Activated CD4-positive, alpha-beta T cell treated with anti-CD3 and anti-CD28 coated beads for 36 hours (primary cell): ENCODE measurements at regions of chr3 and their contacts with region 1.

Region 1: DNA sequence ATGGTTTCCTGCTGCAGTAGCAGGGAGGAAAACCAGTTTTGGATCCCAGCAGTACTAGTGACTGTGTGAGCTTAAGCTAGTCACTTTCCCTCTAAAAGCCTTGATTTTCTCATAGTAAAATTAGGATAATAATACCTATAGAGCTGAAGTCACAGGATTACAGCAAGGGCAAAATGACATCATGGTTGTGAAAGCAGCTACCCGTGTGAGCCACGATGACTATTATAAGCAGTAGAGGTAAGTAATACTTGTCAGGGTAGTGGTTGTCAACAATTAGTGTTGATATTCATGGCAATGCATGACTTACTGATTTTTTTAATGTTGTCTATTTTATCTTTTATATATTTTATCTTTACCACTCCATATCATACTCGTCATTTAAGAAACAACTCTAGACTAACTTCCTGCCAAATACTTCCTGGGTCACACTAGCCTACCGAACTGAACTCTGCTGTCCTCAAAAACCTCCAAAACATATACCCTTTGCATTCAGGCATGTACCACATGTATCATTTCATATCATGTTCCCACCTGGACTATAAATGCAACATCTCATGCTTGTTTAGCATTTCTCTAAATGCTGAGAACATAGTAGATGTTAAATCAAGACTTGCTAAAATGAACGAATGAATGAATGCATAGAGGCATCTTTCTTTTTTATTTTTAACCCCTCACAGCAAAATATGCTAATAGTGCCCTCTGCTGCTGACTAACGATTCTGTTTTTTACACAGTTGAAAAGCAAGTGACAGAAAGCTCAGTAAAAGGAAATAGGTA is 172.6 kb downstream of the P3H2 start:
- DNase-seq: peak; percentile 26
- ATAC-seq: peak; percentile 62
- H3K4me3 Mint-ChIP-seq: no peak overlapping the region
- H3K27ac Mint-ChIP-seq: peak overlapping the region; percentile 3
- H3K4me1 Mint-ChIP-seq: peaks cover 18% of the 10 kb centered on the region
- H3K27me3 Mint-ChIP-seq: no peaks in the 10 kb centered on the region

Region 2: DNA sequence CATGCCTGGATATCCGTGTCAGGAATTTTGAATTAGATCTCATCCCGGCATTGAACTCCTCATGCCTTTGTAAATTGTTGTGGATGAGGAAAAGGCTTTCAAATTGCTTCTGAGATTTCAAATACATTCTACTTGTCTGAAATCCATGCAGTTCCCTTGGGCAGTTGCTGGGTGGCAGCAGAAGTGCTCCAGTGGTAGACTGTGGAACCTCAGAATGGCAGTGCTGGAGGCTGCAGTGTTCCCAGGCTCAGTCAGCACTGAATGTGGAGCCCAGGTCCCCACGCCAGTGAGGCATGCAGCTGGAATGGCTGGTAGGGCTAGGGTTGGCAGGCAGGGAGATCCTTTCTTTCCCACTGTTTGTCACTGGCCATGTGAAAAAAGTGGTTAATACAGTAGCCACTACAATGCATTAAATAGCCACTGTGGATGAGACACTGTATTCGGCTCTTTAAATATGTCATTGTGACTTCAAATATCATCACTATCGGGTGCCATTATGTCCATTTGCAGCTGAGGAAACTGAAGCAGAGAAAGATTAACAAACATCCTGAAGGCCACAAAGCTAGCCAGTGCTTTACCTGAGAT is 677.8 kb before region 1 on chr3:
- CTCF ChIA-PET with region 1: interaction called, 22 read pairs
- POLR2A ChIA-PET with region 1: no interaction called
- intact Hi-C with region 1: loop called (anchors 1 to 2 kb)
- DNase-seq: peak; percentile 67
- ATAC-seq: peak; percentile 80
- H3K4me3 Mint-ChIP-seq: no peak overlapping the region
- H3K27ac Mint-ChIP-seq: no peak overlapping the region
- H3K4me1 Mint-ChIP-seq: peaks cover 18% of the 10 kb centered on the region
- H3K27me3 Mint-ChIP-seq: no peaks in the 10 kb centered on the region

Region 3: DNA sequence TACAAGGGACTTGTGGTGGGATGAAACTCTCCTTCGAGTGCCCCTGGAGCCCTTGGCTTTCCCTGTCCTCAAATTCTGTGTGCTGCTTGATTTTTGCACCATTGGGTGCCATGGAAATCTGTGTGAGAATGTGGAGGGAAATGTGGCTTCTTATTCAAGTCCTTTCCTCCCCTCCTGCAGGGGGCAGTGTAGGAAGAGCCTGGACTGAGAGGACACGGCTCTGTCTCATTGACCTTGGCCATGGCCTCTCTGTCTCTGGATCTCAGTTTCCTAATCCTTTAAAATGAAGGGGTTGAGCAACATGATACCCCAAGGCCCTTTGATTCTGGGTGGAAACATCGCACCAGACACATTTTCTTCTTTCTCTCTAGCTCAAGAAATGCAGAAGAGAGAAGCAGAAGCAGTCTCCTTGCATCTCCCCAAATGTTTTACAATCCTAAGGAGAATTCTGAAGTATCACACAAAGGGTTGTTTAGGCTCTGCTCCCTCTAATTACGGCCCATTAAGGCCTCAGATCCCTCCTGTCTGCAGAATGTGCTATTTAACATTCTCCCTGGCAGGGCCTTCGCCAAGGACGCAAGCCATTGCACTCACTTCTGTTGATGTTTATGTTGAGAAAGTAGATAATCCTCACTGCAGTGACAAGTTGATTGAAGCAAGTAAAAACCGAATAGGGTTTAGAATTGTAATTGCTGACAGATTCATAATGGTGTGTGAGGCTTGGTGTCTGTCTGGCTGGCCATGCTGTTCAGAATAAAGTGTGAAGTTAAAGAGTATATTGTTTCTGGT is 607.3 kb before region 1 on chr3:
- CTCF ChIA-PET with region 1: no interaction called
- POLR2A ChIA-PET with region 1: no interaction called
- intact Hi-C with region 1: loop called in 1 of 2 experiments (anchors 5 kb)
- DNase-seq: peak; percentile 42
- ATAC-seq: no peak
- H3K4me3 Mint-ChIP-seq: no peak overlapping the region
- H3K27ac Mint-ChIP-seq: no peak overlapping the region
- H3K4me1 Mint-ChIP-seq: peaks cover 3% of the 10 kb centered on the region
- H3K27me3 Mint-ChIP-seq: no peaks in the 10 kb centered on the region

Region 4: DNA sequence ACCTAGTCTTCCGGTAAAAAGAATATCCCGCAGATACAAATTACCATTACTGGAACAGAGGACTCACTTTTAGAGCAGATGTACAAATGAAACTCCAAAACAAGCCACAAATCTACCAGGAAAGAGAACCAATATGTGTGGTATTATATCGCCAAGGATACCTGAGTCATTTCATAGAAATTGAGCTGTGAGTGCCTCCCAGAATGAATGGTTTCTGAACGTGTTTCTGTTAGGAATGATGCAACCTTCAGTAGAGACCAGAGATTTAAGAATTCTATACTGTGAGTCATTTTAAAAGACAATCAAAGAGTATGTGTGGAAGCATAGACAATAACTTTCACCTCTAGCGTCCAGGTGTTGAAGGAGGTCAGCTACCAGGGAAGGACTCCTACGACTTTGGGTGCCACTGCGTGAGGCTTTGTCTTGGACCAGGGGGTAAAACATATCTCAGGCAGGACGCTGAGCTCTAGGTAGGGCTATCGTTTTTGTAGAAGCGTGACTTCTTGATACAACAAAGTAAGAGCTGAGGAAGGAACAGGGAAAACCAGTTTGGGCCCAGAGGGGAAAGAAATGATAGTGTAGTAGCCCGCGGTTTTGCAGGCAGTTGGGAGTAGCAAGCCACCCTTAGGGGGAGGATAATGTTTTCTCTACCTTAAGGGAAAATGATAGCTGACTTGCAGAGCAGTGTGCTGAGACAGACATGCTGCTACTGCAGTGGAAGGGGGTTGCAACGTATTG is 106.5 kb before region 1 on chr3:
- CTCF ChIA-PET with region 1: interaction called, 3 read pairs
- POLR2A ChIA-PET with region 1: no interaction called
- intact Hi-C with region 1: loop called (anchors 1 to 5 kb)
- DNase-seq: peak; percentile 13
- ATAC-seq: peak; percentile 89
- H3K4me3 Mint-ChIP-seq: no peak overlapping the region
- H3K27ac Mint-ChIP-seq: peak overlapping the region; percentile 82
- H3K4me1 Mint-ChIP-seq: peaks cover 27% of the 10 kb centered on the region
- H3K27me3 Mint-ChIP-seq: peaks cover 9% of the 10 kb centered on the region

Region 5: GRCh38 chr3:190073264-190074008 is 125.3 kb after region 1 on chr3:
- CTCF ChIA-PET with region 1: no interaction called
- POLR2A ChIA-PET with region 1: no interaction called
- intact Hi-C with region 1: no loop called
- DNase-seq: no peak
- ATAC-seq: no peak
- H3K4me3 Mint-ChIP-seq: no peak overlapping the region
- H3K27ac Mint-ChIP-seq: no peak overlapping the region
- H3K4me1 Mint-ChIP-seq: no peaks in the 10 kb centered on the region
- H3K27me3 Mint-ChIP-seq: peaks cover 17% of the 10 kb centered on the region